Activated CD4-positive, alpha-beta memory T cell treated with anti-CD3 and anti-CD28 coated beads for 36 hours (primary cell): ENCODE measurements at regions of chr10 and their contacts with region 1.

Region 1: GRCh38 chr10:100518761-100519241 is 860 bp downstream of the SEC31B start:
- DNase-seq: peak; percentile 76
- H3K4me3 Mint-ChIP-seq: no peak overlapping the region
- H3K27ac Mint-ChIP-seq: peak overlapping the region; percentile 11
- H3K4me1 Mint-ChIP-seq: peaks cover 12% of the 10 kb centered on the region
- H3K27me3 Mint-ChIP-seq: no peaks in the 10 kb centered on the region

Region 2: GRCh38 chr10:99870123-99870730 is 648.6 kb before region 1 on chr10:
- CTCF ChIA-PET with region 1: no interaction called
- POLR2A ChIA-PET with region 1: no interaction called
- intact Hi-C with region 1: no loop called
- DNase-seq: peak; percentile 74
- H3K4me3 Mint-ChIP-seq: peak overlapping the region; percentile 42
- H3K27ac Mint-ChIP-seq: no peak overlapping the region
- H3K4me1 Mint-ChIP-seq: peaks cover 26% of the 10 kb centered on the region
- H3K27me3 Mint-ChIP-seq: peaks cover 87% of the 10 kb centered on the region

Region 3: DNA sequence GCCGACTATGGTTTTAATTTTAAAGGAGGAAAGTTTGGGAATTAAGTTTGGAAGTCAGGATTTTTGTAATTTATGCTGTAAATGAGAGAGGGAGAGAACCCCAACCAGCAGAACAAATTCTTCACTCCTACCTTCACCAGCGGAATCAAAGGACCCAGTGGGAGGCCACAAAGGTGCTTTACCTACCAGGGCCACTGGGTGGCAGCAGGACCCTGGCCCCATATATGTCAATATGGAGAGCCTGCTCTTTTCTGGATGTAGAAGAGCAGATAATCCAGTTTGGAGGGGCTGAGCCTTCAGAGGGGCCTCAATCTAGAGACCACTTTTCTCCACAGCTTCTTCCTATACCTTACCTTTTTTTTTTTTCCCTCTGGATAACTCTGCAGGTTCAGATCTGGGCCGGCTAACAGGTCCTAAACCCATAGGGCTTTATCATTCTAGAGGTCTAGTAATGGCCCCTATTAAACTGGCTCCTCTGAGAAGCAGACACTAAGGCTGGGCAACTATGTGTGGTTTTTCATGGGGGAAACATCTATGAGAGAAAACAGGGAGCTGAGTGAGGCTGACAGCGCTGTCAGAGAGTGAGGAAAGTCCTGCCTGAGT is 180.3 kb before region 1 on chr10:
- CTCF ChIA-PET with region 1: interaction called, 17 read pairs
- POLR2A ChIA-PET with region 1: no interaction called
- intact Hi-C with region 1: no loop called
- DNase-seq: peak; percentile 88
- H3K4me3 Mint-ChIP-seq: no peak overlapping the region
- H3K27ac Mint-ChIP-seq: no peak overlapping the region
- H3K4me1 Mint-ChIP-seq: no peaks in the 10 kb centered on the region
- H3K27me3 Mint-ChIP-seq: peaks cover 4% of the 10 kb centered on the region

Region 4: DNA sequence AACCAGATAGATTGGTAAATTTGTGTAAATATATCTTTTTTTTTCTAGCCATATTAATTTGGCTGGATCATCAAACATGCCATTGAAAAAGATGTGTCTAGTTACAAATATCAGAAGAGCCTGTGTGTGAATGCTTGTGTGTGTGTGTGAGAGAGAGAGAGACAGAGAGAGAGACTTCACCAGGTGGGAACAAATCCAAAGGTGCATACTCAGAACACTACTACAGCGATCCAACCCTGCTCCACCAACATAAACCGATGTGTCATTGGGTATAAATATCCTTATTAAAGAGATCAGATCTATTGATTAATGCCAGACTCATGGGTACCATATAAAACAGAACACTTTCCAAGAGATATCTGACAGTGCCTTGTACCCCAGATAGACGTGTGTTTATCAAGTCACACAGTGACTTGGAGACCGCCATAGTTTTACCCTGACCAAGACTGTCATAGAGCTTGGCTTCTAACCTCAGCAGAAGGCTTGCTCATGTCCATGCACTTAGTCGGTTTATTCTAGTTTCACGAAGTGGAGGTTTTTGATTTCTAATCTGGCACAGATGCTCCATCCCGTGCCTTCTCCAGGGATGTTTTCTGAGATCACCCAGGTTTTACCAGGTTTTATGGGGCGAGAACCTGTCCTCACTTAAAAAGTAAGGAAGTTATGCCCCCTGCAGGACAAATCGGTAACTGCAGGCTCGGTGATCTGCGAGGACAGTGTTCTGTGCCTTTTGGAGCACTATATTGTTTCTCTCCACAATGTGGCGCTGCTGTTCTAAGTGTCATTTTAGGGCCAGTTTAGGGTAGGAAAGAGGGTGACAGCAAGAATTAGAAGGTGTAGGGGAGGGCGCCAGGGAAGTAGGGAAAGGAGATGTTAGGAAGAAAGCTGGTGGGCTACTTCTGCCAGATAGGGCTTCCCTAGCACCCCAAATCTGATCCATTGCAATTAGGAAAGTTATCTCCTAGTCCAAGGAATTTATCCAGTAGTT is 85.3 kb before region 1 on chr10:
- CTCF ChIA-PET with region 1: interaction called, 85 read pairs
- POLR2A ChIA-PET with region 1: no interaction called
- intact Hi-C with region 1: loop called (anchors 1 kb)
- DNase-seq: peak; percentile 97
- H3K4me3 Mint-ChIP-seq: no peak overlapping the region
- H3K27ac Mint-ChIP-seq: peak overlapping the region; percentile 2
- H3K4me1 Mint-ChIP-seq: peaks cover 2% of the 10 kb centered on the region
- H3K27me3 Mint-ChIP-seq: no peaks in the 10 kb centered on the region

Region 5: DNA sequence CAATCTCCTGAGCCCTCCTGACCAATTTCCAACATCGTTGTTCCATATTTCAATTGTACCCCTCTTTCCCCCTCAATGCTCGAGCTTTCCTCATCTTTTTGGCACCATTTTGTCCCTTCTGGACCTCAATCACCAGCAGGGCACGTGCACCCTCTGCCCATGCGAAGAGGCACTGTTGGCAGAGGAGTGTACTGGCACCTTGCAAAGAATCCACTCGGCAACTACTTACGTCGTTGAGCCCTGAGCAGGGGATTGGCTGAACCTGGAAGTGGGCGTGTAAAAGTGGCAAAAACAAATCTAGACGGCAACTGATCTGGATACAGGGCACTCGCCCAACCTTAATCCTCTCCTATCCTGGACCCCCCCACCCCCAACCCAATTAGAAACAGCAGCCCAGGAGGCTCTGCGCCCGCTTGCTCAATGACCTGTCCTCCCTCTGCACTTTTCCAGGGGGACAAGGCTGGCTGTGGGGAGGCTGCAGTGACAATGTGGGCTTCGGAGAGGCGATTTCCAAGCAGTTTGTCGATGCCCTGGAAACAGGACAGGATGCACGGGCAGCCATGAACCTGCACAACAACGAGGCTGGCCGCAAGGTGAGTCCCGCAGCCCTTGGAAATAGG is 37.2 kb before region 1 on chr10:
- CTCF ChIA-PET with region 1: interaction called, 144 read pairs
- POLR2A ChIA-PET with region 1: interaction called, 6 read pairs
- intact Hi-C with region 1: loop called (anchors 1 kb)
- DNase-seq: peak; percentile 97
- H3K4me3 Mint-ChIP-seq: peak overlapping the region; percentile 74
- H3K27ac Mint-ChIP-seq: peak overlapping the region; percentile 6
- H3K4me1 Mint-ChIP-seq: peaks cover 12% of the 10 kb centered on the region
- H3K27me3 Mint-ChIP-seq: peaks cover 14% of the 10 kb centered on the region

Region 6: GRCh38 chr10:100535715-100536353 is 17.0 kb after region 1 on chr10 and contains the start of gene HIF1AN:
- CTCF ChIA-PET with region 1: interaction called, 47 read pairs
- POLR2A ChIA-PET with region 1: interaction called, 3 read pairs
- intact Hi-C with region 1: no loop called
- DNase-seq: peak; percentile 92
- H3K4me3 Mint-ChIP-seq: no peak within 1 kb of the TSS
- H3K27ac Mint-ChIP-seq: no peak within 1 kb of the TSS
- H3K4me1 Mint-ChIP-seq: peaks cover 37% of the 10 kb centered on the region
- H3K27me3 Mint-ChIP-seq: no peaks in the 10 kb centered on the region
- total RNA-seq, gene HIF1AN: 40.6 to 47.4 TPM